Activated CD4-positive, alpha-beta memory T cell treated with anti-CD3 and anti-CD28 coated beads for 36 hours (primary cell): ENCODE measurements at regions of chr5 and their contacts with region 1.

Region 1: DNA sequence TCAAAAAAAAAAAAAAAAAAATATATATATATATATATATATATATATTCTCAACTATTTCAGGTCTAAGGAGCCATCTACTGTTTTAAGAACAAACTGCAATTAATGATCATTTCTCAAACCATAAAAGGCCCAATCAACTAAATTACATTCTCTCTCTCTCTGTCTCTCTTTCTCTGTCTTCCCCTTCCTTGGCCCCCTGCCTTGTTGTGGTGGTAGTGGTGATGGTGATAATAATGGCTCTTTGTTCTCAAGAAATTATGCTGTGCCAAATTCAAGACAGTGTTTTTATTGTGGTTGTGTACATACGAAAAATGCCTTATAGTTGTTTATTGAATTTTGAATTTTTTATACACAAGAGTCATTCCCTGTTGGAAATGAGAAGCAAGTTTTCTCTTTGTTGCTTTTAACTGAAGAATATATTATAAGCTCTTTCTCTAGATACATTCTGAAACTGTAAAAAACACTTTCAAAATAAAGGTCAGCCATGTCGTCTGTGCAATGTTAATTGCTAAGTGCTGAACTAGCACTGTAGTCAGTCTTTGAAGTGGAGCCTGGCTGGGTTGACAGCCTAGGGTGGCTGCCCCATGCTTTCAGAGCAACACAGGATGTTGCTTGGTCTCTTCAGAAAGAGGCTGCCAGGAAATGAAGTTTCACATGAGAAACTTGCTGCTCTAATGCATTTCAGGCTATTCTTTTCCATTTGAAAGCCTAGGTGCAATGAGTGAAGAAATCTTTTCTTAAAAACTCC is 96.0 kb downstream of the HINT1 start:
- DNase-seq: peak; percentile 79
- H3K4me3 Mint-ChIP-seq: peak overlapping the region; percentile 1
- H3K27ac Mint-ChIP-seq: peak overlapping the region; percentile 90
- H3K4me1 Mint-ChIP-seq: peaks cover 49% of the 10 kb centered on the region
- H3K27me3 Mint-ChIP-seq: no peaks in the 10 kb centered on the region

Region 2: GRCh38 chr5:130871346-130872086 is 197.6 kb before region 1 on chr5:
- CTCF ChIA-PET with region 1: interaction called, 11 read pairs
- POLR2A ChIA-PET with region 1: no interaction called
- intact Hi-C with region 1: loop called (anchors 1 kb)
- DNase-seq: peak; percentile 40
- H3K4me3 Mint-ChIP-seq: no peak overlapping the region
- H3K27ac Mint-ChIP-seq: no peak overlapping the region
- H3K4me1 Mint-ChIP-seq: peaks cover 8% of the 10 kb centered on the region
- H3K27me3 Mint-ChIP-seq: no peaks in the 10 kb centered on the region

Region 3: DNA sequence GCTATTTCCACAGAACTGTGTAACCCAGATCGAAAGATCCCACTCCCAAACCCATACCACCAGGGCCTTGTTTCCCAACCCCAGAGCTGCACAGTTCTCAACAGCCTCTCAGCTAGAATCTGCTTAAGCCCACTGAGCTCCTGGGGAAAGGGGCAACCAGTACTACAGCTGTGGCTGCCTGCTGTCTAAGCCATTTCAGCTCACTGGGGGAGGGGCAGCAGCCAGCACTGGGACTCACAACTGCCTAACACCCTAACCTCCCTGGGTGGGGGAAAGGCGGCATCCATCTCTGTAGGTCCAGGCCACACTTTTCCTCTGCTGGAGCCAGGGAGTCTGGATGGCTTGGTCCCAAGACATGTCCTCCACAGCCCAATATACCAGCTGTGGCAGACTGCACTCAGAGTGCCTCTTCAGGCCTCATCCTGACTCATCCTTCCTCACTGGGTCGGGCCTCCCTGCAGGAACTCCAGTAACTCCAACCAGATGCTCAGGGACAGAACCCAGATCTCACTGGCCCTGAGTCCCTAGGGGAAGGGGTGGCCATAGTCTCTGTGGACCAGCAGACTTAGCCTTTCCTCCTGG is 145.4 kb before region 1 on chr5:
- CTCF ChIA-PET with region 1: no interaction called
- POLR2A ChIA-PET with region 1: no interaction called
- intact Hi-C with region 1: no loop called
- DNase-seq: no peak
- H3K4me3 Mint-ChIP-seq: no peak overlapping the region
- H3K27ac Mint-ChIP-seq: no peak overlapping the region
- H3K4me1 Mint-ChIP-seq: no peaks in the 10 kb centered on the region
- H3K27me3 Mint-ChIP-seq: peaks cover 2% of the 10 kb centered on the region

Region 4: GRCh38 chr5:131096774-131097710 is 28.0 kb after region 1 on chr5:
- CTCF ChIA-PET with region 1: no interaction called
- POLR2A ChIA-PET with region 1: interaction called, 3 read pairs
- intact Hi-C with region 1: loop called (anchors 1 kb)
- DNase-seq: no peak
- H3K4me3 Mint-ChIP-seq: no peak overlapping the region
- H3K27ac Mint-ChIP-seq: no peak overlapping the region
- H3K4me1 Mint-ChIP-seq: peaks cover 10% of the 10 kb centered on the region
- H3K27me3 Mint-ChIP-seq: peaks cover 4% of the 10 kb centered on the region

Region 5: DNA sequence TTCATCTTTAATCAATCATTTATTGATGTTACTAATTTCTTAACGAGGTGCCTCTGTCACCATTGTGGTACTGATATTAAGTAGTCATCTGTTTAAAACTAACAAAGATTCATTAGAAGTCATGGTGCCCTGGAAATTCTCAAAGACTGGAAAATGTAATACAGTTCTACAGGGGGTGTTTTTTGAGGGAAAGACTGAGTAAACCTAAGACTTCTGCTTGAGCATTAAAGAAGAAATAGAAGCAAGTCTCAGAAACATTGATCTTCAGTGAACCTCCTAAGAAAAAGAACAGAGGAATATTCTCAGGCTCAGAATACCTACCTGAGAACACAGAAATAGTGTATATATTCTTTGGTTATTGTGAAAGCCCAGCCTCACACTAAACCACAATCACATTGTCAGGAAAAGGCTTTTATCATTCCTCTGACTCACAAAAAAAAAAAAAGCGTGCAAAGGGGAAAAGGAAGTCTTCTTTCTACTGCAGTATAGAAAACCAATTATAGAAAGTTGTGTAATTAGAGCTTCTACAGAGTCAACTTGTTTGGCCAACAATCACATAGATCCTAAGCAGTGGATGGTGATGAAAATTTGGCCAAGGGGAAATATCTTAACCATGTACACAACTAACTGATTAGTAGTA is 35.2 kb after region 1 on chr5:
- CTCF ChIA-PET with region 1: no interaction called
- POLR2A ChIA-PET with region 1: interaction called, 3 read pairs
- intact Hi-C with region 1: loop called (anchors 2 kb)
- DNase-seq: no peak
- H3K4me3 Mint-ChIP-seq: no peak overlapping the region
- H3K27ac Mint-ChIP-seq: peak overlapping the region; percentile 10
- H3K4me1 Mint-ChIP-seq: peaks cover 9% of the 10 kb centered on the region
- H3K27me3 Mint-ChIP-seq: no peaks in the 10 kb centered on the region

Region 6: DNA sequence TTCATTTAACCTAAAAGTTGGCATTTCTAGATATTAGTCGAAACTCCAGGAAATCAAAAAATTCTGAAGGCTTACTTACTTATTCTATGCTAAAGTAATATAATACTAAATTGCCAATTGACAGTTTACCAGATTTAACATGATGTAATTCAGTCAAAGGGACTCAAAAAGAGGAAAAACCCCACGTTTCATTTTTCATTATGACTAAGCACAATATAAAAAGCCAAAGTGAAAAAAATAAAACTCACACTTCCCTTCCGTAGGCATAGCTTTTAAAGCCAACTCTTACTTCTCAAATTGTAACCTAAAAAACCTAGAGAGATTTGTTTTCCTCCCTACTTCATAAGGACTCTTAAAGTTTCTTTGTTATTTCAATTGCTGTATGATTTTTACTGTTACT is 419.4 kb after region 1 on chr5:
- CTCF ChIA-PET with region 1: no interaction called
- POLR2A ChIA-PET with region 1: no interaction called
- intact Hi-C with region 1: no loop called
- DNase-seq: no peak
- H3K4me3 Mint-ChIP-seq: peak overlapping the region; percentile 16
- H3K27ac Mint-ChIP-seq: peak overlapping the region; percentile 70
- H3K4me1 Mint-ChIP-seq: peaks cover 30% of the 10 kb centered on the region
- H3K27me3 Mint-ChIP-seq: no peaks in the 10 kb centered on the region